ENCODE measurements at regions of chr12 and their contacts with region 1.

Region 1: GRCh38 chr12:49088190-49088931 is 6.2 kb downstream of the DHH start:
- DNase-seq: peak; percentile 81
- ATAC-seq: peak; percentile 95
- H3K4me3 Mint-ChIP-seq: no peak overlapping the region
- H3K27ac Mint-ChIP-seq: no peak overlapping the region
- H3K4me1 Mint-ChIP-seq: peaks cover 43% of the 10 kb centered on the region
- H3K27me3 Mint-ChIP-seq: peaks cover 46% of the 10 kb centered on the region
- CTCF ChIP-seq: peak; percentile 88

Region 2: DNA sequence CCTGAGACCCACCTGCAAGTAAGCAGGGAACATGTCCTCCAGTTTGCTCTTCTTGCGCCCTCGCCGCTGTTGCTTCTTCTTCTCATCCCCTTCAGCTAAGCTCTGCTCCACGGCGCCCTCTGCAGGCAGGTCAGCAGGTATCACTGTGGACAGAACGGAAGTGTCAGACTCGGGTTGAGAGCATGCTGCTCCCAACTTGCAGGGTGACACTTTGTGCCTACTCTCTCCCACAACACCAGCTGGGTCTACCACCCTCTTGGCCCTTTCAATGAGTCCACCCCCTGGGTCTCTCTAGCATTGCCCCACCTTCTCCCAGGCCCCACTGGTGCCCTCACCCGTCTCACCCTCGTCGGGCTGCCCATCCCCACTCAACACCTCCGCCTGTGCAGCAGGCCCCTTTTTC is 44.5 kb before region 1 on chr12:
- CTCF ChIA-PET with region 1: interaction called, 21 read pairs
- POLR2A ChIA-PET with region 1: no interaction called
- intact Hi-C with region 1: no loop called
- DNase-seq: peak; percentile 84
- ATAC-seq: peak; percentile 94
- H3K4me3 Mint-ChIP-seq: no peak overlapping the region
- H3K27ac Mint-ChIP-seq: no peak overlapping the region
- H3K4me1 Mint-ChIP-seq: no peaks in the 10 kb centered on the region
- H3K27me3 Mint-ChIP-seq: no peaks in the 10 kb centered on the region
- CTCF ChIP-seq: peak; percentile 86

Region 3: GRCh38 chr12:49069507-49070346 is 18.6 kb before region 1 on chr12 and contains the start of gene RHEBL1:
- CTCF ChIA-PET with region 1: interaction called, 220 read pairs
- POLR2A ChIA-PET with region 1: interaction called, 10 read pairs
- intact Hi-C with region 1: no loop called
- DNase-seq: peak; percentile 100
- ATAC-seq: peak; percentile 100
- H3K4me3 Mint-ChIP-seq: peak within 1 kb of the TSS; percentile 98
- H3K27ac Mint-ChIP-seq: peak within 1 kb of the TSS; percentile 92
- H3K4me1 Mint-ChIP-seq: peaks cover 27% of the 10 kb centered on the region
- H3K27me3 Mint-ChIP-seq: no peaks in the 10 kb centered on the region
- CTCF ChIP-seq: no peak
- total RNA-seq, gene RHEBL1: 18.5 to 19.8 TPM

Region 4: GRCh38 chr12:49121047-49121696 is 32.8 kb after region 1 on chr12:
- CTCF ChIA-PET with region 1: interaction called, 22 read pairs
- POLR2A ChIA-PET with region 1: interaction called, 13 read pairs
- intact Hi-C with region 1: no loop called
- DNase-seq: no peak
- ATAC-seq: no peak
- H3K4me3 Mint-ChIP-seq: no peak overlapping the region
- H3K27ac Mint-ChIP-seq: no peak overlapping the region
- H3K4me1 Mint-ChIP-seq: no peaks in the 10 kb centered on the region
- H3K27me3 Mint-ChIP-seq: no peaks in the 10 kb centered on the region
- CTCF ChIP-seq: no peak

Region 5: DNA sequence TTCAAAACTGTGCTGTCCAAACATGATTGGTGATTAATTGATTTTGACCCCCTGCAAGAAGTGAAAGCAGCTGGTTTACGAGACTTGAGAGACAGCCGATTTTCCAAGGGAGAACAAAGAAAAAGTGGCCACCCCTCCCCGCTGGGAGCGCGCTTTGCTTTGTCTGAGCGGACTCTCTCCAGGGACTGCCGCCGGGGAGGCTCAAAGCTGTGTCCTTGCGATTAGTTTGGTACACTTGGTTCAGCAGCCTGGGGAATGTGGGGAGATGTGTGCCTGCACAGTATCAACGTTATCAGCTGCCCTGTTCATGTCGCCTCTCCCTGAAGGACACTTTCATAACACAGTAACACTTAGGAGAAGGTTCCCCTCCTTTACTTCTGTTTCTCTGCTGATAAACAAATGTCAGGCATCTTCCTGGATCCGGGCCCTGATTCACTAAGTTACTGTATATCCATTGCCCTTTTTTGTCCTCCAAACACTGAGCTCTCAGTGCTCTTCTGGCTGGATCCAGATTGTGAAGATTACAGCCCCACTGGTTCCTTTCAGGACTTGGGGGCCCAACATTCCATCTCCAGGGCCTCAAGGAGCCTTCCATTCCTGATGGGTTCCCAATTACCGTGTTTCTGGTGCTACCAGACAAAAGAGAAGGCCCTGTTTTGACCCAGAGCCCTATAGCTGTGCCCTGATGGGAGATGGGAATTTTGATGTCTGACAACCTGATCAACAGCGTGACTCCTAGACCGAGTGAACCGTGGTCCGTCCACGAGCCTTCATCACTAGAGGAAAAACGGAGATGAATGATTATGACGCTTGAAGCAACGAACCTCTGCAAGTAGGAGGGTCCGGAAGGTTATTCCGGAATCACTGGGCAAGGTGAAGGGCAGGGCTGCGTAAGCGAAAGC is 144.8 kb after region 1 on chr12:
- CTCF ChIA-PET with region 1: interaction called, 27 read pairs
- POLR2A ChIA-PET with region 1: no interaction called
- intact Hi-C with region 1: loop called (anchors 10 kb)
- DNase-seq: no peak
- ATAC-seq: no peak
- H3K4me3 Mint-ChIP-seq: peak overlapping the region; percentile 85
- H3K27ac Mint-ChIP-seq: peak overlapping the region; percentile 55
- H3K4me1 Mint-ChIP-seq: peaks cover 13% of the 10 kb centered on the region
- H3K27me3 Mint-ChIP-seq: no peaks in the 10 kb centered on the region
- CTCF ChIP-seq: no peak

Region 6: DNA sequence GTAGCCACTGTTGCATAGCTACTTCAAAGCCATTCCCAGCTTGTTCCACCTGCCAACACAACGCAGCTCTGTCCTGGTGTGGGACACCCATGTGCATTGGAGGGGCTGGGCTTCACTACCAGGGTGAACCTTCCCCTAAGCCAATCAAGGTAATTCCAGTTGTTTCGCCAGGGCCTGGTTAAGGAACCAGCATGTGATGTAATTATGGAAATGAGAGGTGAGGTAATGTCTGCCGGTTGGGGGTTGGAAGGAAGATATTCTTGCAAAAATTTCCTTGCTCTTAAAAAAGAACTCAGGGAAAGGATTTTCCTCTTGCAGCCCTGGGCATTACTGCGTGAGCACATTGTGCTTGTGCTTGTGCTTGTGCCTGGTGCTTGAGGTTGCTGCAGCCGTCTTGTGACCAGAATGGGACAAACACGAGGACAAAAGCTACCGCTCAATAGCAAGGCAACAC is 191.4 kb after region 1 on chr12:
- CTCF ChIA-PET with region 1: no interaction called
- POLR2A ChIA-PET with region 1: no interaction called
- intact Hi-C with region 1: no loop called
- DNase-seq: no peak
- ATAC-seq: no peak
- H3K4me3 Mint-ChIP-seq: no peak overlapping the region
- H3K27ac Mint-ChIP-seq: no peak overlapping the region
- H3K4me1 Mint-ChIP-seq: no peaks in the 10 kb centered on the region
- H3K27me3 Mint-ChIP-seq: peaks cover 9% of the 10 kb centered on the region
- CTCF ChIP-seq: no peak